ENCODE measurements at regions of chr22 and their contacts with region 1.

Region 1: GRCh38 chr22:49305214-49305909 is 522.3 kb downstream of the BRD1 start:
- DNase-seq: peak in 1 of 2 donors; percentile 73
- H3K4me3 ChIP-seq: peak overlapping the region in 1 of 2 donors; percentile 45
- H3K27ac ChIP-seq: no peak overlapping the region
- H3K4me1 ChIP-seq: no peaks in the 10 kb centered on the region
- H3K27me3 ChIP-seq: no peaks in the 10 kb centered on the region
- CTCF ChIP-seq: peak; percentile 83 to 97 (median 95)

Region 2: GRCh38 chr22:48943567-48944432 is 361.6 kb before region 1 on chr22:
- intact Hi-C with region 1: loop called (anchors 10 kb)
- DNase-seq: peak in 1 of 2 donors; percentile 56
- H3K4me3 ChIP-seq: no peak overlapping the region
- H3K27ac ChIP-seq: no peak overlapping the region
- H3K4me1 ChIP-seq: no peaks in the 10 kb centered on the region
- H3K27me3 ChIP-seq: no peaks in the 10 kb centered on the region
- CTCF ChIP-seq: peak in 2 of 3 experiments; percentile 41 to 54

Region 3: GRCh38 chr22:49046546-49047361 is 258.6 kb before region 1 on chr22:
- intact Hi-C with region 1: loop called (anchors 1 kb)
- DNase-seq: peak in 1 of 2 donors; percentile 60
- H3K4me3 ChIP-seq: no peak overlapping the region
- H3K27ac ChIP-seq: no peak overlapping the region
- H3K4me1 ChIP-seq: no peaks in the 10 kb centered on the region
- H3K27me3 ChIP-seq: no peaks in the 10 kb centered on the region
- CTCF ChIP-seq: peak in 2 of 3 experiments; percentile 13 to 45

Region 4: DNA sequence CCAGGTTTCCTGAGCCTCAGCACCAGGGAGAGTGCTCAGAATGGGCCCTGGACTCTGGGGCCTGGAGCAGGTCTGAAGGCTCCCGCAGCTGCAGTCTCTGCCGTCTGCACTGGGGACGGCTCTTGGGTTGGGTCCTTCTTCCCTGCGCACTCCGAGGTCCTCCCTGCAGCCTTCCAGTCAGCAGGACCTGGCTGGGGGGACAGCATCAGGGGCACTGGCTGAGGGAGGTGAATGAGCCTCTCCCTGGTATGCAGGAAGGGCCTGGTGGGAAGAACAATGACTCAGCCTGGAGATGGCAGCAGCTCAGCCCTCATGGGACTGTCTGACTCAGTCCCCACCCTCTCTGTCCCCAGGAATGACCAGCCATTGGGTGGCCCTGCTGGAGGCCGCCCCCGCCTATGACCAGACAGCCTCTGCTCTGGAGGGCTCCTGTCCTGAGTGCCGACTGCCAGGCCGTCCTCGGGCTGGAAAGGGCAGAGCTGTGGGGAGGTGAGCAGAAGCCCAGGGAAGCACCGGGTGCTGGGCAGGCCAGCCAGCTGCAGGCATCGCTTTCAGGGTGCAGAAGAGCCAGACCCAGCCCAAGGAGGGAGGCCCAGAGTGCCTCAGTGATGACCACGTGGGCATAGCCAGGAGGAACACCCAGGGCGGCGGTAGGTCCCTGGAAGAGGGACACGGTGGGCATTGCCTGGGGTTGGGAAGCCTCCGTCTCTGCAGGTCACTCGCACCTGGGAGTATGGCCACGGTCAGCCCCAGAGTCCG is 67.3 kb after region 1 on chr22:
- intact Hi-C with region 1: no loop called
- DNase-seq: peak in 1 of 2 donors; percentile 56
- H3K4me3 ChIP-seq: no peak overlapping the region
- H3K27ac ChIP-seq: no peak overlapping the region
- H3K4me1 ChIP-seq: no peaks in the 10 kb centered on the region
- H3K27me3 ChIP-seq: no peaks in the 10 kb centered on the region
- CTCF ChIP-seq: no peak

Measured in ascending aorta (tissue), 2 donors.